ENCODE measurements at regions of chr20 and their contacts with region 1.

Region 1: GRCh38 chr20:30610029-30610693 is 647.3 kb upstream of the DEFB115 start:
- DNase-seq: peak in 1 of 2 donors; percentile 47
- ATAC-seq: peak in 6 of 8 donors; percentile 38 to 83 (median 57)
- H3K4me3 ChIP-seq: no peak overlapping the region
- H3K27ac ChIP-seq: no peak overlapping the region
- H3K4me1 ChIP-seq: peaks cover 0 to 14% (median 0%) of the 10 kb centered on the region in 9 donors
- H3K27me3 ChIP-seq: no peaks in the 10 kb centered on the region
- CTCF ChIP-seq: no peak

Region 2: GRCh38 chr20:30281584-30282197 is 328.5 kb before region 1 on chr20:
- intact Hi-C with region 1: no loop called
- DNase-seq: peak in 1 of 2 donors; percentile 21
- ATAC-seq: peak in 2 of 8 donors; percentile 34 to 56
- H3K4me3 ChIP-seq: peak overlapping the region in 5 of 10 donors; percentile 24 to 35 (median 32)
- H3K27ac ChIP-seq: no peak overlapping the region
- H3K4me1 ChIP-seq: peaks cover 0 to 14% (median 3%) of the 10 kb centered on the region in 9 donors
- H3K27me3 ChIP-seq: peaks cover 0 to 18% (median 0%) of the 10 kb centered on the region in 7 donors
- CTCF ChIP-seq: no peak

Region 3: DNA sequence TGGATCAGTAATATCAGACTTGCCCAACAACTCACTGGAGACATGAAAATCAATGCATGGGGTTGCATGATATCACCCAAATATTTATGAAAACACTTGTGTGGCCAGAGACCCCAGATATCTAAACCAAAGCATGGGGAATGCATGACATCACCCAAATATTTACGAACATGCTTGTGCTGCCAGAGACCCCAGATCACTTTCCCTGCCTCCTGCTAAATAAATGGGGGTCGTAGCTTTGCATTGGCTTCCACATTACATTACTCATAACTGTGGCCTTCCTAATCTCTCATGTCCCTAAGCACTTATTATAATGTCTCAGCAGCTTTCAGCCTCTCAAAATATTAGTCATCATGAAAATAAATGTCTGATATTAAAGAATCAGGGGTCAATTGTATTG is 190.7 kb before region 1 on chr20:
- intact Hi-C with region 1: no loop called
- DNase-seq: no peak
- ATAC-seq: no peak
- H3K4me3 ChIP-seq: no peak overlapping the region
- H3K27ac ChIP-seq: no peak overlapping the region
- H3K4me1 ChIP-seq: no peaks in the 10 kb centered on the region
- H3K27me3 ChIP-seq: peaks cover 0 to 4% (median 0%) of the 10 kb centered on the region in 7 donors
- CTCF ChIP-seq: no peak

Region 4: GRCh38 chr20:30630761-30631160 is 20.6 kb after region 1 on chr20:
- intact Hi-C with region 1: loop called in 1 of 10 experiments (anchors 2 kb)
- DNase-seq: no peak
- ATAC-seq: no peak
- H3K4me3 ChIP-seq: no peak overlapping the region
- H3K27ac ChIP-seq: no peak overlapping the region
- H3K4me1 ChIP-seq: no peaks in the 10 kb centered on the region
- H3K27me3 ChIP-seq: peaks cover 0 to 4% (median 0%) of the 10 kb centered on the region in 7 donors
- CTCF ChIP-seq: no peak

Region 5: GRCh38 chr20:30949761-30950160 is 339.6 kb after region 1 on chr20:
- intact Hi-C with region 1: no loop called
- DNase-seq: peak in 1 of 2 donors; percentile 3
- ATAC-seq: no peak
- H3K4me3 ChIP-seq: no peak overlapping the region
- H3K27ac ChIP-seq: no peak overlapping the region
- H3K4me1 ChIP-seq: no peaks in the 10 kb centered on the region
- H3K27me3 ChIP-seq: no peaks in the 10 kb centered on the region
- CTCF ChIP-seq: no peak